AG04449 (cell line): ENCODE measurements at regions of chr19 and their contacts with region 1.

Region 1: DNA sequence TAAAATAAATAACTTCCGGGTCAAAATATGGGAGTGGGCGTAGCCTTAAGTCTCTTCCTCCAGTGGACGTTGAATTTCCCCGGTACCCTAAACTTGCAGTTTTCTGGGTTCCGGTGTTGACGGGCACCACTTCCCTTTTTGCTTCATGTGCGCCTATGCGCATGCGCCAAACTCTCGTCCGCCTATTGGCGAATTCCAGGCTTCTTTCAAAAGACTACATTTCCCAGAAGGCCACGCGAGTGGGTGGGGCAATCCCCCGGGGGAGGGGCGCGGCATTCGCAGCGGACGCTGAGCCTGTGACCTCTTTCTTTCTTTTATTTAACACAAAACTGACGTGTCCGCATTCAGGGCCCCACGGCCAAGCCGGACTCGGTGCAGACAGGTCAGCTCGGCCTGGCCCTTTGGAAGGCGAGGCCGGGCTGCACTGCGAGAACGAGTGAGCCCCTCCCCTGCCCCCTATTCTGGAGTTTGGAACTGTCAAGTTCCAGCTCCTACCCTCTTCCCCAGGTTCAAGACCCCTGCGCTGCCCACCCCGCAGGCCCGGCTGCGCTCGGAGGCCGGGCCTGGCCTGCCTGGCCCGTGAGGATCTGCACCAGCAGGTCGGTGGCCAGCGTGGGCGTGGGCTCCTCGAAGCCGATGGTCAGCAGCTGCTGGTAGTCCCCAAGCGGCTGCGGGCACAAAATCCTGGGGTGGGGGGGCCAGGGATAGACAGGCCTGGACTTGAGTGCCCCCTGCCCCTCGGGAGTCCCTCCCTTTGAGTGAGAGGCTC is 4.1 kb downstream of the C19orf67 start:
- DNase-seq: peak; percentile 93
- H3K4me3 ChIP-seq: peak overlapping the region; percentile 81
- CTCF ChIP-seq: no peak

Region 2: DNA sequence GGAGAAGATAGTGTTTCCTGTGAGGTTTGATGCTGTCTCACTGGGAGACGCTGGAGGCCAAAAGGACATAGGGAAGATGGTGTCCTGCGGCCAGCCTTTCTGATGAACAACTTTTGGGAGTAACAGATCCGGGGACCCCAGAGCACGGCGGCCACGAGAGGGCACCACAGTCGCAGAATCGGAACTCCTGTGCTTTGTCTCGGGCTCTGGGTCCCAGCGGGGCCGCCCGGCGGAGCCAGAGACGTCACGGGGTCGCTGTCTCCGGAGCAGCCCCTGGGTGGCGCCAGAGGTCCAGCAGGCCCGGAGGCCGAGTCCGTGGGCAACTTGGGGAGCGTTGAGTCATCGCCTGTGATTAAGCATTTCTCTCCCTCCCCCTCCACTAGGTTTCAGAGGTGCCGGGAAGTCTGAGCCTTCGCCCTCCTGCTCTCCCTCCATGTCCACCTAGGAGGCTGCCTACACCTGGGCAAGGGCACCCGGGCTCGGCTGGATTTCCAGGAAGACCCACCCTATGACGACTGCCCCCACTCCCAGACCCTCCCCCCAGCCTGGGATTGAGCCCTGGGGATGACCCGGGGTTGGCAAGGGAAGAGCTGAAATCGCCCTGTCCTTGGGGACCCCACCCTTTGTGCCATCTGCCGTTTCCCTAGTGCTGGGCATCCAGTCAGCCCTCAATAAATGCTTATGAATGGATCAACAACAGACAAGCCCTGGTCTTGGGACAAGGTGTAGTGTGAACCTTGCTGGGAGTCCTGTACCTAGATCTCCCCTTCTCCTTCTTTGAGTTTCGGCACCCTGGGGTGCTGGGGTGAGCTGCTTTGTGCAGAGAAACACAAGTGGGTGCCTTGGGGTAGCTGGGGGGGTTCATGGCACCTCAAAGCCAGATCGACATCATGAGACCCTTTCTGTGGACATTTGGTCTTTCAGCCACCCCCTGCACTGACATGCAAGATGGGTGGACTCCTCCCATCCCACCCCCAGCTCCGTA is 201.2 kb before region 1 on chr19:
- CTCF ChIA-PET with region 1: interaction called, 184 read pairs
- POLR2A ChIA-PET with region 1: no interaction called
- DNase-seq: peak; percentile 51
- H3K4me3 ChIP-seq: peak overlapping the region; percentile 31
- CTCF ChIP-seq: peak; percentile 95

Region 3: DNA sequence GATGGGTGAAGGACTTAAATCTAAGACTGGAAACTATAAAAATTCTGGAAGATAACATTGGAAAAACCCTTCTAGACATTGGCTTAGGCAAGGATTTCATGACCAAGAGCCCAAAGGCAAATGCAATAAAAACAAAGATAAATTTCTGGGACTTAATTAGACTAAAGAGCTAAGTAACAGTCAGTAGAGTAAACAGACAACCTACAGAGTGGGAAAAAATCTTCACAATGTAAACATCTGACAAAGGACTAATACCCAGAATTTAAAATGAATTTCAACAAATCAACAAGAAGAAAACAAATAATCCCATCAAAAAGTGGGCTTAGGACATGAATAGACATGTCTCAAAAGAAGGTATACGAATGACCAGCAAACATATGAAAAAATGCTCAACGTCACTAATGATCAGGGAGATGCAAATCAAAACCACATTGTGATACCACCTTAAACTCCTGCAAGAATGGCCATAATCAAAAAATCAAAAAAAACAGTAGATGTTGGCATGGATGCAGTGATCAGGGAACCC is 69.1 kb before region 1 on chr19:
- CTCF ChIA-PET with region 1: no interaction called
- POLR2A ChIA-PET with region 1: no interaction called
- DNase-seq: no peak
- H3K4me3 ChIP-seq: no peak overlapping the region
- CTCF ChIP-seq: no peak

Region 4: DNA sequence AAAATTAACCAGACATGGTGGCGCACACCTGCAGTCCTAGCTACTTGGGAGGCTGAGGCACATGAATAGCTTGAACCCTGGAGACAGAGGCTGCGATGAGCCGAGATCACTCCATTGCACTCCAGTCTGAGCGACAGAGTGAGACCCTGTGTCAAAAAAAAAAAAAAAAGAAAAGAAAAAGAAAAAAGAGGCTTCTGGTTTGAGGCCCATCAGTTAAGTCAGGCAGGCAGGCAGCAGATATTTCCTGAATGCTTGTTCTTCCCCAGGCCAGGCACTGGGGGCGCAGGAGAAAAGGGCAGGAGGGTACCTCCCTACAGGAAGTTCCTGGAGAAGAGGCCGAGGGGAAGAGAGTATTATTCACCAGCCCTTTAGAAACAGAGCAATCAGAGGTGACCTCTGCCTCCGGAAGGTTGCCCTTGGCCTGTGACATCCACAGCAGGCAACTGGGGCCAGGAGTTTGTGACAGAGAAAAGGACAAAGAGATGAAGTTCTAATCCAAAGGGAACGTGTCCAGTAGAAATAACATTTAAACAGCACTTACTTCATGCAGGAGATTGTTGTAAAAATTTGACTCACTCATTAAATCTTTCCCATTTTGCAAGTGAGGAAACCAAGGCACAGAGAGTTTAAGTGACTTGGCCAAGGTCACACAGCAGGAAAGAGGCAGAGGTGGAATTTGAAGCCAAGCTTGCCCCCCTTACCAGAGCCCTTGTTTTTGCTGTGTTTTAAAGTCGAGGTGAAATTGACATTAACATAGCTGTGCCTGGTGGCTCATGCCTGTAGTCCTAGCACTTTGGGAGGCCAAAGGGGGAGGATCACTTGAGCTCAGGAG is 57.9 kb before region 1 on chr19:
- CTCF ChIA-PET with region 1: no interaction called
- POLR2A ChIA-PET with region 1: no interaction called
- DNase-seq: no peak
- H3K4me3 ChIP-seq: no peak overlapping the region
- CTCF ChIP-seq: peak; percentile 38

Region 5: GRCh38 chr19:14117668-14118164 is 36.2 kb after region 1 on chr19 and contains the start of gene PRKACA:
- CTCF ChIA-PET with region 1: interaction called, 10 read pairs
- POLR2A ChIA-PET with region 1: no interaction called
- DNase-seq: peak; percentile 84
- H3K4me3 ChIP-seq: peak within 1 kb of the TSS; percentile 76
- CTCF ChIP-seq: no peak